ENCODE measurements at regions of chr22 and their contacts with region 1.

Region 1: DNA sequence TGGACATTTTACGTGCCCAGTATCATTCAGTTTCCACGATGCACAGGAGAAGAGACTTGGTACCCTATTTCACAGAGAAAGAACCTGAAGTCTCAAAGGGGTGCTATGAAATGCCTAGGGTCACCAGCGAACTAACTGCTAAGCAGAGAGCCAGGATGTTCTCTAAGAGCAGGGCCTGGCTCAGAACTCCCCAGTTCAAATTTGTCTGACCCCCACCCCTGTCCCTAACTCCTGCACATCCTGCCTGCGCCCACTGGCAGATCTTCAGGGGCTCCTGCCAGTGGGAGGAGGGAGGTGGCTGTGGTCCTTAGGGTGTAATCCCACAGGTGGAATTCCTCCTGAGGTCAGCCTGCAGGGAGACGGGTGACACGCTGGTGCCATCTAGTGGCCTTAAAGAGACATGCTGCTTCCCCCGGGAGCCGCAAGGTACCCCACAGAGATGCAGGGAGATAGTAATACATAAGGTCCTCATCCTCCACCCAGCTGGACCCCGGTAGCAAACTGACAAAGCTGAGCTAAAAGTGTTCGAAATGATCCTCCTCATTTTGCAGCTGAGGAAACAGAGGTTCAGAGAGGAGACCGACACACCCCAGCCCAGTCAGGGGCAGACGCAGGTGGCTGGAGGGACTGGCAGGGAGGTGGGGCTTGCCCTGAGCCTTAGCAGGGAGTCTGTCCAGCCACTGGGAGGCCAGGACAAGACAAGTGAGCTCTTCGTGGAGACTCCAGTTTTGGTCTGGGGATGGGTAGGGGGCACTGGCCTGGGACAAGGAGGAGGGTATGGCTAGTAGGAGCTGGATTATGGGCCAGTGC is 34.1 kb downstream of the MB start:
- DNase-seq: no peak
- H3K4me3 ChIP-seq: no peak overlapping the region
- H3K27ac ChIP-seq: peak overlapping the region in 2 of 4 donors; percentile 3 to 44
- H3K4me1 ChIP-seq: peaks cover 0 to 10% (median 8%) of the 10 kb centered on the region in 3 donors
- H3K27me3 ChIP-seq: no peaks in the 10 kb centered on the region
- CTCF ChIP-seq: peak; percentile 80 to 94 (median 88)
- POLR2A ChIP-seq: no peak

Region 2: GRCh38 chr22:35430897-35431322 is 152.2 kb before region 1 on chr22:
- intact Hi-C with region 1: loop called (anchors 5 kb)
- DNase-seq: no peak
- H3K4me3 ChIP-seq: peak overlapping the region in 1 of 4 donors; percentile 19
- H3K27ac ChIP-seq: peak overlapping the region; percentile 18 to 44 (median 28)
- H3K4me1 ChIP-seq: peaks cover 0 to 15% (median 4%) of the 10 kb centered on the region in 3 donors
- H3K27me3 ChIP-seq: no peaks in the 10 kb centered on the region
- CTCF ChIP-seq: peak; percentile 79 to 99 (median 97)
- POLR2A ChIP-seq: no peak

Region 3: DNA sequence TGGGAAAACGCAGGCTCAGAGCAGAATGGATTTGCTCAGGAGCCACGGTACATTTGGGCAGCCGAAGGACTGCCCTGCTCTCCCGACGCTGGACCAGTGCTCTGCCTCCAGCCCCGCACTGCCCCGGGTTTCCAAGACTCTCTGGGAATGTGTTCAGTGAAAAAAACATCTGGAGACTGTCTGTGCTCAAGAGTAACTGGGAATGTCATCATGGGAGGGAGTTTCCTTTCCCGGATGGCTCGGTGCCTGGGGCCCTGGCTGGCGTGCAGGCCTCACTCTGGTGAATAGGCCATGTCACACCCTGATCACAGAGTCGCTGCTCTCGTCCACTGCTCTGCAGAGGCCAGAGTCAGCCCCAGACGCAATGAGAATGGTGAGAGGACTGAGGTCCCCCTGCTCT is 55.3 kb after region 1 on chr22:
- intact Hi-C with region 1: no loop called
- DNase-seq: no peak
- H3K4me3 ChIP-seq: no peak overlapping the region
- H3K27ac ChIP-seq: peak overlapping the region; percentile 63 to 88 (median 85)
- H3K4me1 ChIP-seq: peaks cover 15 to 42% (median 21%) of the 10 kb centered on the region in 3 donors
- H3K27me3 ChIP-seq: no peaks in the 10 kb centered on the region
- CTCF ChIP-seq: no peak
- POLR2A ChIP-seq: no peak

Measured in esophagus squamous epithelium (tissue), 5 donors.